AG04450 (cell line): ENCODE measurements at regions of chr6 and their contacts with region 1.

Region 1: DNA sequence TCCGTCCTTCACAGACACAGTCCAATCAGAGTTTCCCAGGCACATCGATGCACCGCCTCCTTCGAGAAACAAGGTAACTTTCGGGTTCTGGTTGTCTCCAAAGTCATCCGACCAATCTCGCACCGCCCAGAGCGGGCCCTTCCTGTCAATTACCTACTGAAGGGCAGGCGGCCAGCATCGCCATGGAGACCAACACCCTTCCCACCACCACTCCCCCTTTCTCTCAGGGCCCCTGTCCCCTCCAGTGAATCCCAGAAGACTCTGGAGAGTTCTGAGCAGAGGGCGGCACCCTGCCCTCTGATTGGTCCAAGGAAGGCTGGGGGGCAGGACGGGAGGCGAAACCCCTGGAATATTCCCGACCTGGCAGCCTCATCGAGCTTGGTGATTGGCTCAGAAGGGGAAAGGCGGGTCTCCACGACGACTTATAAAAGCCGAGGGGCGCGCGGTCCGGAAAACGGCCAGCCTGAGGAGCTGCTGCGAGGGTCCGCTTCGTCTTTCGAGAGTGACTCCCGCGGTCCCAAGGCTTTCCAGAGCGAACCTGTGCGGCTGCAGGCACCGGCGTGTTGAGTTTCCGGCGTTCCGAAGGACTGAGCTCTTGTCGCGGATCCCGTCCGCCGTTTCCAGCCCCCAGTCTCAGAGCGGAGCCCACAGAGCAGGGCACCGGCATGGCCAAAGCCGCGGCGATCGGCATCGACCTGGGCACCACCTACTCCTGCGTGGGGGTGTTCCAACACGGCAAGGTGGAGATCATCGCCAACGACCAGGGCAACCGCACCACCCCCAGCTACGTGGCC is at the start of gene HSPA1B:
- DNase-seq: peak; percentile 99
- H3K4me3 ChIP-seq: peak within 1 kb of the TSS; percentile 79
- H3K27ac ChIP-seq: peak within 1 kb of the TSS; percentile 90
- H3K27me3 ChIP-seq: no peaks in the 10 kb centered on the region
- CTCF ChIP-seq: no peak
- polyA plus RNA-seq, gene HSPA1B: 31.9 TPM in 2 replicates

Region 2: GRCh38 chr6:31652925-31653718 is 174.4 kb before region 1 on chr6:
- CTCF ChIA-PET with region 1: interaction called, 5 read pairs
- POLR2A ChIA-PET with region 1: interaction called, 12 read pairs
- DNase-seq: no peak
- H3K4me3 ChIP-seq: peak overlapping the region; percentile 88
- H3K27ac ChIP-seq: peak overlapping the region; percentile 98
- H3K27me3 ChIP-seq: no peaks in the 10 kb centered on the region
- CTCF ChIP-seq: no peak

Region 3: DNA sequence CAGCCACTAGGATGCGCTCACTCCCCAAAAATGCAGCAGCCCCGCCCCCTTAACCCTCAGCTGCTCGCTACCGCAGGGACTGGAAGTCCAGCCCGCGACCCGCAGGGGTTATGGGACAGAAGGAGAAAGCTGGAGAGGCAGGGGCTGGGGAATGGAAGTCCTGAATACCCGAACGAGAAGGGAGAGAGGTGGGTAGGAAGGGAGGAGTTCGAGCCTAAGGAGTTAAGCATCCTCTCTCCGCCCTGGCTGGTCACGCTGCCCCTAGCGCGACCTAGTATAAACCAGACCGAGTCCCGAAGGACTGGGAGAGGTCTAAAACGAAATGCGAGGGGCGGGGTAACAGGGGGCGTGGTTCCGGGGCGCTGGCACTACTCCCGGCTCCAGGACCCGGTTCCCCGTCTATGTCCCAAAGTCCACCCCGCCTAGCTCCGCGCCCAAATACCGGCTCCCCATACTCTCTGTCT is 97.9 kb before region 1 on chr6:
- CTCF ChIA-PET with region 1: interaction called, 11 read pairs
- POLR2A ChIA-PET with region 1: interaction called, 14 read pairs
- DNase-seq: peak; percentile 51
- H3K4me3 ChIP-seq: peak overlapping the region; percentile 90
- H3K27ac ChIP-seq: peak overlapping the region; percentile 90
- H3K27me3 ChIP-seq: no peaks in the 10 kb centered on the region
- CTCF ChIP-seq: peak; percentile 52

Region 4: GRCh38 chr6:31769684-31770371 is 57.7 kb before region 1 on chr6:
- CTCF ChIA-PET with region 1: interaction called, 20 read pairs
- POLR2A ChIA-PET with region 1: interaction called, 7 read pairs
- DNase-seq: no peak
- H3K4me3 ChIP-seq: no peak overlapping the region
- H3K27ac ChIP-seq: no peak overlapping the region
- H3K27me3 ChIP-seq: no peaks in the 10 kb centered on the region
- CTCF ChIP-seq: peak; percentile 69

Region 5: DNA sequence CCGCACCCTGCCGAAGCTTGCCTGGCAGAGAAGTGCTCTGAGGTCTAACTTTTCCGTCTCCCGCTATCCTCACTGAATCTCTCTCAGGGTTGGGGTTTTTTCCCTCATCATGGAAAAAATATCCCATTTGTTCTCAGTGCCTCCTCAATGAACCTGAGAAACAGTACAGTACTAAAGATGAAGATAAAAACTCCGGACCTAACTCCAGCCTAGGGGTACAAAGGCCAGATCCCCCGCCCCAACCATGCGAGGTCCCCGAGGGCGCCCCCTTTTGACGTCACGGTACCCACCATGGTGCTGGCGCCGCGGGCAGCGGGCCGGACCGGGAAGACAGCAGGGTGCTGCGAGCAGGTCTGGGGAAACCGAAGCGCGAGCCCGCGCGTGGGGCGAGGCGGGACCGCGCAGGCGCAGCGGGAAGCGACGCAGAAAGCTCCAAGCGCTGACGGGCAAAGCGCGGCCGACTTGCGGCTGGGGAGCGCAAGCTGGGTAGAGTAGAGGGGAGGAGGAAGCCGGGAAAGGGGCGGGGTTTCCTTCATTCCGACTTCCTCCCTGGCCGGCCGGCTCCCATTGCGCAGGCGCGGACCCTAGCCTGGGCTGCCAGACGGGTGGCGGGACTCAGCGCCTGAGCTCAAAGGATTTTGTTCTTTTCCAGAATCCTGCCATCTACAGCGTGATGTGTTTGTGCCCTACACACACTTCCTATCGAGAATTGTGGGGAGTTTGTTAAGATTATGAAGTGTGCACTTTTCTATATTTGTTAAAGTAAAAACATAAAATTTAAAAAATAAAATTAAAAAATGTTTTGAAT is 20.8 kb before region 1 on chr6 and contains the start of gene LSM2:
- CTCF ChIA-PET with region 1: interaction called, 10 read pairs
- POLR2A ChIA-PET with region 1: interaction called, 40 read pairs
- DNase-seq: peak; percentile 93
- H3K4me3 ChIP-seq: peak within 1 kb of the TSS; percentile 78
- H3K27ac ChIP-seq: peak within 1 kb of the TSS; percentile 70
- H3K27me3 ChIP-seq: no peaks in the 10 kb centered on the region
- CTCF ChIP-seq: peak; percentile 18
- polyA plus RNA-seq, gene LSM2: 34.2 and 38.3 TPM in 2 replicates

Region 6: GRCh38 chr6:31862344-31863227 is 35.1 kb after region 1 on chr6 and contains the start of gene NEU1:
- CTCF ChIA-PET with region 1: interaction called, 4 read pairs
- POLR2A ChIA-PET with region 1: interaction called, 15 read pairs
- DNase-seq: peak; percentile 100
- H3K4me3 ChIP-seq: peak within 1 kb of the TSS; percentile 92
- H3K27ac ChIP-seq: peak within 1 kb of the TSS; percentile 78
- H3K27me3 ChIP-seq: no peaks in the 10 kb centered on the region
- CTCF ChIP-seq: no peak
- polyA plus RNA-seq, gene NEU1: 39.0 and 49.4 TPM in 2 replicates